ENCODE measurements at regions of chr9 and their contacts with region 1.

Region 1: DNA sequence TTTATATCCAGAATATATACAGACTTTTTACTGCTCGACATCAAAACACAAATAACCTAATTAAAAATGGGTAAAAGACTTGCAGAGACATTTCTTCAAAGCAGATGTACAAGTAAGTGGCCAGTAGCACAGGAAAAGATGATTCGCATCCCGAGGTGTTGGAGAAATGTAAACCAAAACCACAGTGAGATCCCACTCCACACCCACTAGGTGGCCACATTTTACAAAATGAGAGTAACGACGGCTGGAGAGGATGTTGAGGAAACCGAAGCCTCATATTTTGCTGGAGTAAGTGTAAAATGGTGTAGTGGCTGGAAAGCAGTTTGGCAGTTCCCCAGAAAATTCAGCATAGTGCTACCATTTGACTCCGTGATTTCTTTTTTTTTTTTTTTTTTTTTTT is 21.2 kb upstream of the GBGT1 start:
- DNase-seq: peak; percentile 69 to 83 (median 70)
- ATAC-seq: peak; percentile 86
- H3K4me3 ChIP-seq: no peak overlapping the region
- H3K27ac ChIP-seq: no peak overlapping the region
- H3K4me1 ChIP-seq: peaks cover 4 to 15% of the 10 kb centered on the region in 2 experiments; a peak in 3 of 5 replicates
- H3K27me3 ChIP-seq: peaks cover 19 to 34% of the 10 kb centered on the region in 2 experiments; a peak in 4 of 5 replicates
- CTCF ChIP-seq: peak; percentile 71 to 88 (median 86)
- EP300 ChIP-seq: no peak
- POLR2A ChIP-seq: no peak
- RAD21 ChIP-seq: peak; percentile 63 to 84

Region 2: DNA sequence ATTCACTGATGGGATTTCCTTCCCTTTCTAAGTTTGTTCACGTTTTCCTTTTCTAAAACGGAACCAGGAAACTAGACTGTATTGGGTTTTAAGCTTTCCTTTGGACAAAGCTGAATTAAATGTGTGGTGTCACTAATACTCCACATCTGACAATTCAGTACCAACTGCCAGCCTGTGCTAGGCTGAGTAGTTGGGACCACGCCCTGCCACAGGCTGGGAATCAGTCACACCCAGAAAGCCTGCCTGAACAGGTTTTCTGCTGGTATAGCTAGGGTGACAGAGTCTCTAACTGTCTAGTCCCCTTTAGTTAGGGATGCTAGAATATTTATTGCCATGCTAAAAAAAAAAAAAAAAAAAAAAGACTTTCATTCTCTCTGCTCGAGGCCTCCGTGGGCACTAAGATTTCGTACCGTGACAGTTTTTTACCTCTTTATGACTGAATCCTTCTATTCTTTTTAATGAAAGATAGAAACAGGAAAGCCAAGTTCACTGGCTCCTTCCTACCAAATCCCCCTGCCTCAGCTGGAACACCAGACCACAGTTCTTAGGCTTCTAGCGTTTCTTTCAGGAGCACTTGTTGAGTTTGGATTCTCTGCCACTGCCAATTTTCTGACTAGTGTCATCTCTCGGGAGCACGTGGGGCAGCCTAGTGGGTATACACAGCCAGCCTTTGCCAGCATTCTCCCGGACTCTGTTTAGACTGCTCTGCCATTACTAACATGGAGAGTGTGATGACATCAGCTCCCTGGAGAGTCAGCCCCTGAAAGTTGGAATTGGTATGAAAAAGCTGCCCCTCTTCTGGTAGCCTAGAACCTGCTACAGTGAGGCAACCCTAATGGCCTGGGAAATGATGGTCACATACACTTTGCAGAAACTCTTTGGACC is 290.4 kb before region 1 on chr9:
- CTCF ChIA-PET with region 1: no interaction called
- POLR2A ChIA-PET with region 1: no interaction called
- in situ Hi-C with region 1: no loop called
- intact Hi-C with region 1: no loop called
- DNase-seq: no peak
- ATAC-seq: 0 out of 3 replicates have a peak, but pooled peaks have one; percentile 47
- H3K4me3 ChIP-seq: no peak overlapping the region
- H3K27ac ChIP-seq: no peak overlapping the region
- H3K4me1 ChIP-seq: peaks cover 0 to 2% of the 10 kb centered on the region in 2 experiments; a peak in 2 of 5 replicates
- H3K27me3 ChIP-seq: peaks cover 11 to 15% of the 10 kb centered on the region in 2 experiments; a peak in 4 of 5 replicates
- CTCF ChIP-seq: no peak
- EP300 ChIP-seq: no peak
- POLR2A ChIP-seq: no peak
- RAD21 ChIP-seq: no peak

Region 3: DNA sequence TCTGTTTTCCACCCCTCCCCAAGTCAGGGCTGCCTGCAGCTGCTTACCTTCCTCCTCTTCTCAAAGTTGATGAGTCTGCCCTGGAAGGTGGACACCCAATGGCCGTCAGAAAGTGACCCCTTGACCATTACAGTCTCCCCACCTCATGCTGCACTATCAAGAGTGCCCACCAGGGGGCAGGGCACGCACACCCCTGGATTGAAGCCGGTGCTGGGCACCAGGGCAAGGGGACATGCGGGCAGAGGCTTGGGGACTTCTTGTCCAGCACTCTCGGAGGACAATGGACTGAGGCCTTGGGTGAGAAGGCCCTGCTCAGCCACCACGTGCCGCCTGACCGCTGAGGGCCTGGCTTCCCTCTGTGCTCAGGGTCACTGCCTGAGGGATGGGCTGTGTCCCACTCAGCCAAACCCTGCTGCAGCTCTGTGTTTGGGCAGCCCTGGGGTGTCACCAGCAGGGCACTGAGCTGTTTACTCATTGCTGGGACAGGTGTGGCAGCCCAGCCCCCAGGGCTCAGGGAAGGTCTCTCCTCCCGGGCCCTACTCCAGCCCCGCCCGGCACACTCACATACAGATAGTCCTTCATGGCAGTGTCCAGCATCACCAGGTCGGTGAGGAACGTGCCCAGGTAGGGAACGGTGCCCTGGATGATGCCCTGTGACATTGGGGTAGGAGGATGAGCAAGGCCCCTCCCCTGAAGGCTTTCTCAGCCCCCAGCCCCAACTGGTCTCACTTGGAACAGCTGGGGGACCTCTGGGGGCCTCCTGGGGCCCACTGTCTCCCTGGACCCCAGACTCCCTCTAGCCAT is 81.6 kb before region 1 on chr9:
- CTCF ChIA-PET with region 1: no interaction called
- POLR2A ChIA-PET with region 1: no interaction called
- in situ Hi-C with region 1: no loop called
- intact Hi-C with region 1: loop called (anchors 2 kb)
- DNase-seq: peak; percentile 66 to 79 (median 72)
- ATAC-seq: peak; percentile 91
- H3K4me3 ChIP-seq: no peak overlapping the region
- H3K27ac ChIP-seq: no peak overlapping the region
- H3K4me1 ChIP-seq: peaks cover 0 to 12% of the 10 kb centered on the region in 2 experiments; a peak in 2 of 5 replicates
- H3K27me3 ChIP-seq: no peaks in the 10 kb centered on the region
- CTCF ChIP-seq: peak; percentile 87 to 95 (median 90)
- EP300 ChIP-seq: no peak
- POLR2A ChIP-seq: no peak
- RAD21 ChIP-seq: peak; percentile 92 to 98

Region 4: DNA sequence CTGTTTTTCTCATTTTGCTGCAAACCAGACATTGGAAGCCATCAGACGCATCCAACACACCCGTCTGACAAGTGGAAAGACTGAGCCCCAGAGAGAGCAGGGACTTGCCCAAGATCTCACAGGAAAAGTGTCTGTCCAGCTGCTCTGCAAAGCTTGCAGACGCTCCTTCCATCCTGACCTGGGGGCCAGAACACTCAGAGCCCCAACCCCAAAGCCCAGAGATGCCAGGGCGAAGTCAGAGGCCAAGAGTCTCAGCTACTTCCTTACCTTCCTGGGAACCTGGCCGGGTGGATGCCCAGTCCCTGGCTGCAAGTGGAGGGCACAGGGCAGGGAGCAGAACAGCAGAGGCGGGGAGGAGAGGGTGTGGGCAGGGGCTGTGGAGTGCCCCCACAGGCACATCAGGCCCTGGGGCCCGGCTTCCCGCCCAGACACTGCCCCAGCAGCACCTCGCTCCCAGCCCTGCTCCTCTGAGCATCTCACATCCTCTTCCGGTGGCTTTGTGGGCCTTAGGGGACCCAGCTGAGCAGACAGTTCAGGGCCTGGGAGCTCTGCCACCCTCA is 54.2 kb before region 1 on chr9:
- CTCF ChIA-PET with region 1: no interaction called
- POLR2A ChIA-PET with region 1: no interaction called
- in situ Hi-C with region 1: no loop called
- intact Hi-C with region 1: no loop called
- DNase-seq: no peak
- ATAC-seq: no peak
- H3K4me3 ChIP-seq: no peak overlapping the region
- H3K27ac ChIP-seq: no peak overlapping the region
- H3K4me1 ChIP-seq: peaks cover 37 to 69% of the 10 kb centered on the region in 2 experiments
- H3K27me3 ChIP-seq: no peaks in the 10 kb centered on the region
- CTCF ChIP-seq: no peak
- EP300 ChIP-seq: no peak
- POLR2A ChIP-seq: no peak
- RAD21 ChIP-seq: no peak

Region 5: GRCh38 chr9:133199648-133200321 is 14.8 kb after region 1 on chr9:
- CTCF ChIA-PET with region 1: no interaction called
- POLR2A ChIA-PET with region 1: no interaction called
- in situ Hi-C with region 1: no loop called
- intact Hi-C with region 1: no loop called
- DNase-seq: no peak
- ATAC-seq: peak; percentile 42
- H3K4me3 ChIP-seq: no peak overlapping the region
- H3K27ac ChIP-seq: no peak overlapping the region
- H3K4me1 ChIP-seq: peaks cover 0 to 17% of the 10 kb centered on the region in 2 experiments; a peak in 2 of 5 replicates
- H3K27me3 ChIP-seq: peaks cover 59 to 75% of the 10 kb centered on the region in 2 experiments
- CTCF ChIP-seq: peak in 2 of 3 experiments; percentile 16 to 67; a peak in 3 of 6 replicates
- EP300 ChIP-seq: no peak
- POLR2A ChIP-seq: no peak
- RAD21 ChIP-seq: no peak

Region 6: DNA sequence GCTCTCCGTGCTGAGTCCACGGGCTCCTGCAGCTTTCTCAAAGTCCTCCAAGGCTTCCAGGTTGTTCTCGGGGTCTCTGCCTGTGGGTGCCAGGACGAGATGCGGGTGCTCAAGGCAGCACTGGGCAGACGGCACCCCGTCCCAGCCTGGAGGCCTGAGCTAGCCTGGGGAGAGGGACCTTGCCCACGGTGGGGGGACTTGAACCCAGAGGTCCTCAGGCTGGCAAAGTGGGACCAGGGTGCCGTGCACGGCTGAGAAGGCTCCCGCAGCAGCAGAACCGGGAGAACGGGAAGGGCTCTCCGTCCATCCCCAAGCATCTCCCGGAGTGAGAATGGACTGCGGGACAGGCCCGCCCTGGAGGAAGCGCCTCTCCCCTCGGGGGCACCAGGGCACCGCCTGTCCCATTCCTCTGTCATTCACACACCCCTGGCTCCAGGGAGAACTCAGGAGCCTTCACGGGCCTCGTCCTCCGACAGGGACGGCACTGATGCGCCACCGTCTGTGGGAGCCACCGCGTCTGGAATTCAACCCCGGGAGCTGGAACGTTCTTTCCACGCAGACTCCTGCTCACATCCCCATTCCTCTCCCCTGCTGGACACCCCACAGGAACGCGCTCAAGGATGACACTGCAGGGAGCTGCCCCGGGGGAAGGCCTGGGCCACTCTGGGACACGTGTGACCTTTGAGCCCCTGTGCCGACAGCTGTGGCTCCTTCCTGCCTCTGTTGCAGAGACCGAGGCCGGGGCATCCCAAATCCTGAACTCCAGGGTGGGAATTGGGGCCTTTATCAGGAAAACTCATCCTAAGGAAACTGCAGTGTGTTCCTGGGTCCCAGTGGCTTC is 40.4 kb after region 1 on chr9:
- CTCF ChIA-PET with region 1: no interaction called
- POLR2A ChIA-PET with region 1: no interaction called
- in situ Hi-C with region 1: no loop called
- intact Hi-C with region 1: no loop called
- DNase-seq: no peak
- ATAC-seq: no peak
- H3K4me3 ChIP-seq: no peak overlapping the region
- H3K27ac ChIP-seq: no peak overlapping the region
- H3K4me1 ChIP-seq: peaks cover 0 to 23% of the 10 kb centered on the region in 2 experiments; a peak in 2 of 5 replicates
- H3K27me3 ChIP-seq: peaks cover 12 to 42% of the 10 kb centered on the region in 2 experiments; a peak in 4 of 5 replicates
- CTCF ChIP-seq: no peak
- EP300 ChIP-seq: no peak
- POLR2A ChIP-seq: no peak
- RAD21 ChIP-seq: no peak

Region 7: DNA sequence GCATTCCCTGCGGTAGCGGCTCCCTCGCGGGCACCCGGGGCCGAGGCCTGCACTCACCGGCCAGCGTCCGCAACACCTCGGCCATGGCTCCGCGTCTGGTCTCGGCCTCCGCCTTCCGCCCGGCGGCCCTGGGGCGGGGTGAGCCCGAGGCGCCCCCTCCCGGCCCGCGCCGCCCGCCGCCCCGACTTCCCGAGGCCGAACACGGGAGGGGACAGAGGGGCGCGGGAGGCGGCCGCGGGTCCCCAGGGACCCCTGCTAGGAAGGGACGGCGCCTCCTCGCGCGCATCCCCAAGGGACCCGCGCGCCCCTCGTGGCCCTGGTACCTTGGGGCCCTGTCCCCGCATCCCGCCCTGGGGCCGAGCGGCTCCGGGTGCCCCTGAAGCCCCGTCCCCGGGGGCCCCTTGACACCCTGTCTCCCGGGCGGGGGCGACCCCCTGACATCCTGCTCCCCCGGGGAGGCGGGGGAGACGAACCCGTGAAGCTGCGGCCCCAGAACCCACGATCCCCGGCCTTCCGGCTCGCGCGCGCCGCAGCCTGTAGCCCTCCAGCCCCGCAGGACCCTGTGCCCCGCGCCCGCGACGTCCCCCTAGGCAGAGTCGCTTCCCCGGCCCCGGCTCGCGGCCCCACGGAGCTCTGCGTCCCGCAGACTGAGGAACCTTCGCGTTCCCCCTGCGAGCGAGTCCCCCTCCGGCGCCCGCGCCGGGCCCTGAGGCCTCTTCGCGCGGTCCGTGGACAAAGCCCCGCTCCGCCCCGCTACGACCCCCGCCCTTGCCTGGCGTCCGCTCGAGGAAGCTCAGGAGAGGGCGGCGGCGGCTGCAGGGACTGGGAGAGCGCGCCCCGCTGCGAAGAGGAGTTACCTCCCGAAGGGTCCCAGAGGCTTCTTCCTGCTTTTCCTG is 90.4 kb after region 1 on chr9 and contains the start of gene ABO:
- CTCF ChIA-PET with region 1: interaction called, 4 read pairs
- POLR2A ChIA-PET with region 1: no interaction called
- in situ Hi-C with region 1: no loop called
- intact Hi-C with region 1: loop called (anchors 5 kb)
- DNase-seq: peak; percentile 74 to 89 (median 85)
- ATAC-seq: peak; percentile 84
- H3K4me3 ChIP-seq: peak within 1 kb of the TSS; percentile 75
- H3K27ac ChIP-seq: peak within 1 kb of the TSS; percentile 84
- H3K4me1 ChIP-seq: peaks cover 41 to 42% of the 10 kb centered on the region in 2 experiments
- H3K27me3 ChIP-seq: no peaks in the 10 kb centered on the region
- CTCF ChIP-seq: peak; percentile 24 to 56 (median 45); a peak in 3 of 6 replicates
- EP300 ChIP-seq: no peak
- POLR2A ChIP-seq: peak; percentile 37; the same call in 1 of the 2 replicates
- RAD21 ChIP-seq: peak; percentile 25 to 63
- polyA plus RNA-seq, gene ABO: 16.9 to 21.9 TPM

Region 8: GRCh38 chr9:133334161-133334560 is 149.2 kb after region 1 on chr9:
- CTCF ChIA-PET with region 1: interaction called, 31 read pairs
- POLR2A ChIA-PET with region 1: interaction called, 10 read pairs
- in situ Hi-C with region 1: loop called (anchors 5 kb)
- intact Hi-C with region 1: loop called (anchors 1 kb)
- DNase-seq: no peak
- ATAC-seq: no peak
- H3K4me3 ChIP-seq: peak overlapping the region; percentile 77; the same call in 1 of the 2 replicates
- H3K27ac ChIP-seq: no peak overlapping the region
- H3K4me1 ChIP-seq: peaks cover 6 to 42% of the 10 kb centered on the region in 2 experiments; a peak in 4 of 5 replicates
- H3K27me3 ChIP-seq: no peaks in the 10 kb centered on the region; a peak in 1 of 5 replicates
- CTCF ChIP-seq: no peak
- EP300 ChIP-seq: no peak
- POLR2A ChIP-seq: no peak; the same call in 1 of the 2 replicates
- RAD21 ChIP-seq: no peak

Region 9: GRCh38 chr9:133485361-133486260 is 300.6 kb after region 1 on chr9:
- CTCF ChIA-PET with region 1: interaction called, 33 read pairs
- POLR2A ChIA-PET with region 1: no interaction called
- in situ Hi-C with region 1: loop called (anchors 5 kb)
- intact Hi-C with region 1: loop called (anchors 2 kb)
- DNase-seq: peak in 2 of 4 experiments; percentile 29 to 33
- ATAC-seq: peak; percentile 61
- H3K4me3 ChIP-seq: no peak overlapping the region
- H3K27ac ChIP-seq: no peak overlapping the region
- H3K4me1 ChIP-seq: peaks cover 0 to 35% of the 10 kb centered on the region in 2 experiments; a peak in 3 of 5 replicates
- H3K27me3 ChIP-seq: peaks cover 19 to 63% of the 10 kb centered on the region in 2 experiments; a peak in 4 of 5 replicates
- CTCF ChIP-seq: no peak
- EP300 ChIP-seq: no peak
- POLR2A ChIP-seq: no peak
- RAD21 ChIP-seq: no peak